ENCODE measurements at regions of chr12 and their contacts with region 1.

Region 1: GRCh38 chr12:12376646-12377448 is 20.0 kb downstream of the BORCS5 start:
- DNase-seq: no peak
- H3K4me3 Mint-ChIP-seq: no peak overlapping the region
- H3K27ac Mint-ChIP-seq: no peak overlapping the region
- H3K4me1 Mint-ChIP-seq: peaks cover 25% of the 10 kb centered on the region
- H3K27me3 Mint-ChIP-seq: no peaks in the 10 kb centered on the region
- CTCF ChIP-seq: peak; percentile 23

Region 2: DNA sequence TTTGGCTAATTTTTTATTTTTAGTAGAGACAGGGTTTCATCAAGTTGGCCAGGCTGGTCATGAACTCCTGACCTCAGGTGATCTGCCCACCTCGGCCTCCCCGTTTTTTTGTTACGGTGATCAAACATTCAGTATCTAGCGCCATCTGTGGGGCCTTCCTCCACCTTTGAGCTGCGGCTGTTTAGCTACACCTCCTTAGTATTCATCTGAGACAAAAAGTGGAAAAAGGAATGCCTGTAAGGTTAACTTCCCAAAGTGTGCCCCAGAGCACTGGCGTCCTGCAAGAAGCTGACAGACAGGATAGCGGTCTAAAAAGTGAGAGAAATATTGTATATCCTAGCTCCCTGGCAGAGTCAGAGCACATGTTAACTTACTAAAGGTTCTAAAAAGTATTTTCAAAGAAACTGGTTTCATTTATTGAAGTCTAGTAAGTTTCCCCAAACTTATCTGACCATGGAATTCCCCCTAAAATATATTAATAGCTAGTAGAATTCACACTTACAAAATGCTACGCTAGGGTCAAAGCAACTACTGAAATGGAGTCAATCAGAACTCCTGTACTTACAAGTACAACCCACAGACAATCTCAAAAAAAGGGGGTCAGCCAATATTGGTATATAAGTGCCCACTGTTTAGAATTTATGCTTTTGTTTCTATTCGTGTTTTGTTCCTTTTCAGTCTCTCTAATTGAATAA is 126.7 kb after region 1 on chr12:
- CTCF ChIA-PET with region 1: no interaction called
- intact Hi-C with region 1: no loop called
- DNase-seq: no peak
- H3K4me3 Mint-ChIP-seq: no peak overlapping the region
- H3K27ac Mint-ChIP-seq: no peak overlapping the region
- H3K4me1 Mint-ChIP-seq: peaks cover 19% of the 10 kb centered on the region
- H3K27me3 Mint-ChIP-seq: no peaks in the 10 kb centered on the region
- CTCF ChIP-seq: no peak

Region 3: DNA sequence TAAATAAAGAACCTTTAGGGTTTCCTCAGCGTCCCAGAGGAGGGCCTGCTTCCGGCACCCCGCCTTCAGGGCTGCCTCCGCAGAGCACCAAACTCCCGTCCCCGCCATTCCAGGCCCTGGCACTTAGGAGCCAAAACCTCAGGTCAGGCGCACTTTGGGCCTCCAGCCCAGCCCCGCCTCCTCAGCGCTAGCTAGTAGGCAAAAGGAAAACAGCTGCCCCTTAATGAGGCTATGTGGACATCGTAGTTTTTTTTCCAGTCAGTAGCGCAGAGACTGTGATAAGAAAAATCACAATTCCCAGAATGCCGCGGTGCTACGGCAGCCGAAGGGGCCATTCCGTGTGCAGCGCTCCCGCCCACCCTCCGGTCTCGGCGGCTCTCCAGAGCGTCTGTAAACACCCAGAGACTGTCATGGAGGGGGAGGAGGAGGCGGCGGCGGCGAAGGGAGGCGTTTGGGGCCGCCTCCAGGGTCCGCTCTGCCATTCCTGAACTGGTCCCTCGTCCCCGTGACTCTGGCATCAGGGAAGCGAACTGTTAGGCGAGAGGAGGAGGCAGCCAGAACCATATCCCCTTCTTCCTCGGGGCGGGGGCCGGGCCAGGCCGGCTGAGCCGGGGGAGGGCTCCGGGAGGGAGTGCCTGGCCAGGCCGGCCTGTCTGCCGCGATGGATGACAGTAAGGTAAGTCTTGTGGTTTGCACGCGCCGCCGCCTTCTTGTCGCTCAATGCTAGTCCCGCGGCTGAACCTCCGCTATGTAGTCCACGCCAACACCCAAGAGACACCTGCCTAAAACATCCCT is 234.9 kb after region 1 on chr12 and contains the start of gene CREBL2:
- CTCF ChIA-PET with region 1: interaction called, 3 read pairs
- intact Hi-C with region 1: loop called (anchors 1 kb)
- DNase-seq: peak; percentile 88
- H3K4me3 Mint-ChIP-seq: peak within 1 kb of the TSS; percentile 94
- H3K27ac Mint-ChIP-seq: peak within 1 kb of the TSS; percentile 90
- H3K4me1 Mint-ChIP-seq: peaks cover 43% of the 10 kb centered on the region
- H3K27me3 Mint-ChIP-seq: no peaks in the 10 kb centered on the region
- CTCF ChIP-seq: no peak
- total RNA-seq, gene CREBL2: 17.0 and 20.4 TPM in 2 replicates

Region 4: DNA sequence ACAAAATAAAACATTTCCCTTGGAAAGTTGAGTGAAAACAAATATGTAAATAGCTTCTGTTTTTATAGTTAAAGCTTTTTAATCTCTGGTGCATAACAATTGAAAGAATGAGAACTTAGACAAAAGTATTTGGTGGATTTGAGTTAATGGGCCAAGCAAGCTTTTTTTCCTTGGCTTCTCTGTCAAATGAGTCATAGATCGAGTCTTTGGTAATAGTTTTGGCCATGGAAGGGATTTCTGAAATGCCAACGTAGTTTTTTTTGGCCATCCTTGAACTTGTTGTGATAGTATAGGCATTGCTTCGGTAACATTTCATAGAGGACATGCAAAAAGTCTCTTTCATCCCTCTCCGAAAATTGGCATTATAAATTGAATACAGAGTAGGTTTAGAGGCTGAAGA is 284.2 kb after region 1 on chr12:
- CTCF ChIA-PET with region 1: interaction called, 4 read pairs
- intact Hi-C with region 1: loop called (anchors 1 kb)
- DNase-seq: no peak
- H3K4me3 Mint-ChIP-seq: no peak overlapping the region
- H3K27ac Mint-ChIP-seq: no peak overlapping the region
- H3K4me1 Mint-ChIP-seq: no peaks in the 10 kb centered on the region
- H3K27me3 Mint-ChIP-seq: no peaks in the 10 kb centered on the region
- CTCF ChIP-seq: no peak

Region 5: DNA sequence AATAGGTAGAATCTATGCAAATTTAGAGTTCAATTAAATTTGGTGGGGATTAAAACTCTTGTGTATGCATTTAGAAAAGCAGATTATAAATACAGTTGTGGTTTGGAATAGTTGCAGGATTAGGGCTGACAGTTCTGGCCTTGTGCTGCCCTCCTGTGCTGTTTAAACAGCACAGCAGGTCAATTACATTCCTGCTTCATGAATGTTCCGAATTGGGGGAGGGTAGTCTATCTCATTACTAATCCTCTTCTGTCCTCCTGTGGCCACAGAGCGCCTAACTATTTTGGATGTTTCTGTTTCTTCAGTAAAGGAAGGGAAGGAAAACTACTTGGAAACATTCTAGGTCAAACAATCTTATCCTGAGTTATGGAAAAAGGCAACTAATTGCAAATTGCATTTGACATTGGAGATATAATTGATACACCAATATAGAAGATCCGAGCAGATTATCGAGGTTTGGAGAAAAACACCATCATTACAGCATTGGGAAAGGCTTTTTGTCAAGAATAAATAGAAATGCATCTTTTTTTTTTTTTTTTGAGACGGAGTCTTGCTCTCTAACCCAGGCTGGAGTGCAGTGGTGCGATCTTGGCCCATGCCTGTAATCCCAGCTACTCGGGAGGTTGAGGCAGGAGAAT is 327.9 kb after region 1 on chr12:
- CTCF ChIA-PET with region 1: interaction called, 3 read pairs
- intact Hi-C with region 1: loop called (anchors 1 kb)
- DNase-seq: peak; percentile 60
- H3K4me3 Mint-ChIP-seq: no peak overlapping the region
- H3K27ac Mint-ChIP-seq: no peak overlapping the region
- H3K4me1 Mint-ChIP-seq: peaks cover 17% of the 10 kb centered on the region
- H3K27me3 Mint-ChIP-seq: no peaks in the 10 kb centered on the region
- CTCF ChIP-seq: peak; percentile 71